GM18951 (cell line): ENCODE measurements at regions of chr11 and their contacts with region 1.

Region 1: DNA sequence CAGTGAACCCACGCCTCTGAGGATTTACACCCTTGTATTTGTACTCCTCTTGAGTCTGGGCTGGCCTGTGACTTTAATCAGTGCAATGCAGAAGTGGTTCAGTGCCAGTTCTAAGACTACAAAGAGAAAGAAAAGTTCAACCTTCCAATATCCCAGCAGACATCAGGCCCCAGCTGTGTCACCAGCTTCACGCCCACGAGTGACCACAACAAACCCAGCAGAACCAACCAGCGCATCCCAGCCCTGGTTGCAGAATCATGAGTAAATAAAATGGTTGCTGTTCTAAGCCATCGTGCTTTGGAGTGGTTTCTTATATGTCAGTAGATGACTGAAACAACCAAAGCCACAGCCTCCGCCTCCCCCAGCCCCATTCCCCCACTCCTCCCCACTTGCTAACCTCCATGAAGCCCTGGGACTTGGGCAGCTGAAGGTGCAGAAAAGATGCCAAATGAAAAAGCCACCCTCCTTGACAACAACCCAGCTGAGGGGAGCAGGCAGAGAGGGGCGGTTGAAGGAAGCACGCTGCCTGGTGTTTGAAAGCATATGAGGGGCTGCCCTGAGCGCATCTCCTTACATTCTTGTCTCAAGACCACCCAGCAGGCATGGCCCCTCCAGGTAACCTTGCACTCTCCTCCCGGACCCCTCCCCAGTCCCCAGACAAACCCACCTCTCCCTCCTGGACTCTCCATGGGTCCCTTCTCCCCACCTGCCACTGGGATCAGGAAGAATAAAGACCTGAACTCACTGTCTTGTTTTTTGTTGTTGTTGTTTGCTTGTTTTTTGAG is 20.8 kb downstream of the TSKU start:
- POLR2A ChIP-seq: no peak

Region 2: DNA sequence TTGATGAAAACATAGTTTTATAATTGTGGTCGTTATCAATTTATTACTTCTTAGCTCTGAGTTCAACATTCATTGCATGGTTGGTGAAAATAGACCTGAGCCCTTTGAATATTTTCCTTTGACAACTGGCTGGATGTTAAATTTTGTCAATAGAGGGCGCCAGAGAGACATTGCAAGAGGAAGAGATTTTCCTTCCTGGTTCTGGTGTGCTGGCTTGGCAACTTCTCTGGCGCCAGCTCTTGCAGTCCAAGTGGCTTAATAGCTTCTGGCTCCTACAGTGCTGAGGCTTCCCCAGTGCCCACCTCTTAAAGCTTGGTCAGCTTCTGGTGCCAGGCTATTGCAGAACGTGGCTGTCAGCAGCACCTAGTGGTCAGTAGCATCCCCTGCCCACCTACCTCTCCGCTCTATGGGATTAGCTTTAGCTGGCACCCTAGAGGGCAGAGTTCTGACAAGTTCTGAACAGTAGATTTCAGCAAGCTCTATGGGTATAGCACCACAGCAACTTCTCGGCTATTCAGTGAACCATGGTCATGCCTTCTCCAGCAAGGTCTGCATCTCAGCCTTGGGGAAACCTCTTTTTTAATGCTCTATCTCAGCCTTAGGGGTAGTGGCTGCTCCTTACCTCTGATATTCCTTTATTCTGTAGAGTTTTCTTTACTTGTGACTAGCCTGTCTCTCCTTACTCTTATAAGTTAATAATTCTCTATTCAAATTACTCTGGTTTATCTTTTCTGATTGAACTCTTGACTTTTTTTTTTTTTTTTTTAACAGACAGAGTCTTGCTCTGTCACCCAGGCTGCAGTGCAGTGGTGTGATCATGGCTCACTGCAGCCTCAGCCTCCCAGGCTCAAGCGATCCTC is 116.1 kb after region 1 on chr11:
- in situ Hi-C with region 1: loop called (anchors 5 kb)
- POLR2A ChIP-seq: no peak